Ascending aorta (tissue), 2 donors: ENCODE measurements at regions of chr12 and their contacts with region 1.

Region 1: DNA sequence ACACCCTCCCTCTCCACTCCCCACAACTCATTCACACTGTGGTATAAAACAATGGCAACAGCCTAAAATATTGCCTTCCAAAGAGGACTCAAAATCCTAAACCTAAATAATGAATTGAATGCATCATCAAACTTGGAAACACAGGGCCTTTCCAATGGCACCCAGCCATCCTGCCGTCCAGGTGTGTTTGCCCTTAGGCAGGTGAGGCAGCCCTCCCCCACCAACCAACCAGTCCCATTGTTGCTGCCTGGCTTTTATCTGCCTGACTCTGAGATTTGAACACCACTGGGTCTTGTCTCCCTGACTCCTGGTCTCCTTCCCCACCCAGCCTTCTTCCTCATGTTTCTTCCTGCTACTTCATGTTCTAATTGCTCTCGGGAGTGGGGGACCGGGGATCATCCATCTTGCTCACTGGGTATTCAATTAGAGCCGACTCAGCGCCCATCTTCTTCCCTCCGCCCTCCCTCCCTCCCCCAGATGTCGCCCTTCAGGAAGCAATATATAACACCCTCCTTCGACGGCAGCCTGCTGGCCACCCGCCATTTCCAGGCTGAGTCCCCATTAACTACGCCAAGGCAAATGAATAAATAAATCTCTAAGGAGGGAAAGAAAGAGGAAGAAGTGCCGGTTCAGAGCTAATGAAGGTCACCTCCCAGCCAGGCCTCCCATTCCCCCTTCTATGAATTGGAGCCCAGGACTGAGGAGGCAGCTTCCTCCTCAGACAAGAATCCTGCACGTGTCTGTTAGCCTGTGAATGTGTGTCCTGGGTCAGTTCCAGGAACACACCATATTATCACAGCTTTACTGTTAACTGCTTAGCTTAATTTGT is 36.3 kb upstream of the NTF3 start:
- DNase-seq: no peak
- H3K4me3 ChIP-seq: no peak overlapping the region
- H3K27ac ChIP-seq: no peak overlapping the region
- H3K4me1 ChIP-seq: no peaks in the 10 kb centered on the region
- H3K27me3 ChIP-seq: no peaks in the 10 kb centered on the region
- CTCF ChIP-seq: no peak

Region 2: GRCh38 chr12:5856692-5857091 is 461.0 kb after region 1 on chr12:
- intact Hi-C with region 1: loop called (anchors 5 kb)
- DNase-seq: no peak
- H3K4me3 ChIP-seq: no peak overlapping the region
- H3K27ac ChIP-seq: no peak overlapping the region
- H3K4me1 ChIP-seq: no peaks in the 10 kb centered on the region
- H3K27me3 ChIP-seq: no peaks in the 10 kb centered on the region
- CTCF ChIP-seq: no peak